Transverse colon (tissue), 4 donors: ENCODE measurements at regions of chr1 and their contacts with region 1.

Region 1: DNA sequence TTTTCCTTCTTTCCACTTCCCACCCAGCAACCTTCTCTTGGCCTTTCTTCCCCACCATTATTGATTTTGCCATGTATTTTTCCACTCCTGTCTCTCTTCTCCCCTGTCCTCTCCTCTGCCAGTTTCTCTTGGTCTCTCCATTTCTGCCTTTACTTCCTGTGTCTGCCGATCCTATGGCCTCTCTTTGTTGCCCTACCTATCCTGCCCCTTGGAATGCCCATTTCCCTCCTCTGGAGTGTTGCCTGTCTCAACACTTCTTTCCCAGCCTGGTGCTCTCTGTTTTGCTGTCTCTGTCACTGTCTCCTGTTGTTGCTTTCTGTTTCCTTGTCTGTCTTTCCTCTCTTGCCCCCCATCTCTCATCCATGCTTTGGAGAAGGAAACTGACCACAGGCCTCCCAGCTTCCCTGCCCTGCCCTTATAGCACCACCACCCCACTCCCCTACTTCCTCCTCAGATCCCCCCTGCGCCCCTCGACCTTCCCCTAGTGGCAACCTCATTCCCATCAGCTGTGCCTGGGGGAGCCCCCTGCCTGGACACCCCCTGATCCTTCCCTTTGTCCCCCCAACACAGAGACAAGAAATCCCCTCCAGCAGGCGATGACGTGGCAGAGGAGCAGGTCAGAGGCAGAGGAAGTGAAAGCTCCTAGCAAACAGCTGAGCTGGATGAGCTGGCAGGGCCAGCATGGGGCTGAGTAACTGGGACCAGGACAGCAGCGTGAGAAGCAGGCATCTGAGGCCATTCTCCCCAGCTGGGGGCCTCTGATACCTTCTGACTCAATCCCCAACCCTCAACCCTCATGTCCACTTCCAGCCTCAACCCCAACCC is 6.6 kb upstream of the ETV3L start:
- DNase-seq: peak; percentile 40
- H3K4me3 ChIP-seq: no peak overlapping the region
- H3K27ac ChIP-seq: no peak overlapping the region
- H3K4me1 ChIP-seq: no peaks in the 10 kb centered on the region
- H3K27me3 ChIP-seq: peaks cover 44% of the 10 kb centered on the region
- CTCF ChIP-seq: no peak
- EP300 ChIP-seq: no peak
- POLR2A ChIP-seq: no peak

Region 2: DNA sequence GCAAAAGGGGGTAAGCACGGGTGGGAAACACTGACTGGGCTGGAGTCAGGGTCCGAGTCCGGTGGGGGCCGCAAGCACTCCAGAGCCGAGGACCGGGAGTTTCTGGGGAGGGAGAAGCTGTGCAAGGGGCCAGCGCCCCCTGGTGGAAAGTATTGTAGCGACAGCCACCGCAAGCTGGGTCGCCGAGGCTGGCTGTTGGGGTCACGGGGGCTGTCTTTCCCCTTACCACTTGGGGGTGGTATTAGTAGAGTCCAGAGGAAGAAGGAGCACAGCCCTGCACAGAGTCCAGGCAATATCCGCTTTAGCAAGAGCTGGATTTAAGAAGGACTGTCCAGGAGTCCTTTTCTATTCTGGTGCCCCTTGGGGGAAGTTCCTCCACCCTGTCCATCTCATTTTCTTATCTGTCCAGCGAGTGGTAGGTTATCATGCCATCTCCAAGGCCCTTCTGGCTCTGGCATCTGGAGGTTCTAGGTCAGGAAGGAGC is 49.9 kb after region 1 on chr1:
- in situ Hi-C with region 1: loop called in 1 of 4 experiments (anchors 10 kb)
- intact Hi-C with region 1: no loop called
- DNase-seq: peak; percentile 81
- H3K4me3 ChIP-seq: peak overlapping the region in 1 of 4 donors; percentile 28
- H3K27ac ChIP-seq: no peak overlapping the region
- H3K4me1 ChIP-seq: peaks cover 9 to 28% (median 26%) of the 10 kb centered on the region in 4 donors
- H3K27me3 ChIP-seq: peaks cover 4% of the 10 kb centered on the region
- CTCF ChIP-seq: peak; percentile 96 to 99 (median 98)
- EP300 ChIP-seq: no peak
- POLR2A ChIP-seq: no peak